K562 (cell line): ENCODE measurements at regions of chr3 and their contacts with region 1.

Region 1: GRCh38 chr3:180594631-180595558 is 7.1 kb upstream of the TTC14 start:
- DNase-seq: peak in 1 of 4 experiments; percentile 32
- ATAC-seq: peak; percentile 54; the same call in 1 of the 3 replicates
- H3K4me3 ChIP-seq: no peak overlapping the region
- H3K27ac ChIP-seq: no peak overlapping the region
- H3K4me1 ChIP-seq: no peaks in the 10 kb centered on the region
- H3K27me3 ChIP-seq: peaks cover 0 to 3% of the 10 kb centered on the region in 2 experiments; a peak in 1 of 5 replicates
- CTCF ChIP-seq: peak in 2 of 3 experiments; percentile 34 to 51; a peak in 2 of 6 replicates
- EP300 ChIP-seq: no peak
- POLR2A ChIP-seq: no peak
- RAD21 ChIP-seq: peak; percentile 53 to 57

Region 2: DNA sequence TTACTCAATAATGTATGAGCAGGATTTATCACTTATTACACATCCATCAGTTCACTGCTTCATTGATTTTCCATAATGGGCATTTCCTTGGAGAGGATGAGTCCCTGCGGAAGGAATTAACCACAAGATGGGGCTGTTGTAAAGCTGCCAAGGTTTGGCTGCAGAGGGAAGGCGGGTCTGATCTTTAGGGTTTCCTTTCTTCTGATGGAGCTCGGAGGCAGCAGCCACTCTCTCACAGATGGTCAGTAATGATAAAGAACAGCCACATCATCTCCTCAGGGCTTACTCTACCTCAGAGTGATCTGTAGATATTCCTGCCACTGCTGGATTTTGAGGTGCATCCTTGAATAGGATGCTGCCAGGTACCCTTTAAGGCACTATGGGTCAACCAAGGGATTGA is 826.8 kb before region 1 on chr3:
- CTCF ChIA-PET with region 1: interaction called, 3 read pairs
- POLR2A ChIA-PET with region 1: no interaction called
- in situ Hi-C with region 1: no loop called
- intact Hi-C with region 1: loop called (anchors 5 kb)
- DNase-seq: peak; percentile 59 to 64 (median 60)
- ATAC-seq: peak; percentile 91
- H3K4me3 ChIP-seq: no peak overlapping the region
- H3K27ac ChIP-seq: no peak overlapping the region
- H3K4me1 ChIP-seq: no peaks in the 10 kb centered on the region
- H3K27me3 ChIP-seq: no peaks in the 10 kb centered on the region
- CTCF ChIP-seq: peak; percentile 60 to 71 (median 70)
- EP300 ChIP-seq: no peak
- POLR2A ChIP-seq: no peak
- RAD21 ChIP-seq: peak; percentile 46 to 71

Region 3: DNA sequence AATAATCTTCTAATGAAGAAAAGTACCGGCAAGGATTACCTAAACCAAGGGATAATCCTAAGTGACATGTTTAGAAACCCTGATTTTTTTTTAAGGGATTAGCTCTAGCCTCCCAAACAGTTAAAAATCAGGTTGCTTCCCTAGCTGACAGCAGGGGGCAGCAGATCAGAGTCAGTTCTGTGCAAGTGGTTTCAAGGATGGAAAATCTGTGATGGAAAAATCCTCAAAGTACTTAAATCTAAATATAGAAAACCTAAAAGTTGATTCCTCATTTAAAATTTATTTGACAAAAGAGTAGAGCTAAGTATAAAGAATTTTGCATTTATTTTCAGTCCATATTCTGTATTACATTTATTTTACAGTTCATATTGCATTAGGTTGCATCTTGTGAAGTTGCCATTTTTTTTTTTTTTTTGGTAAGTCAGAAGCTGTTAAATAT is 665.8 kb before region 1 on chr3:
- CTCF ChIA-PET with region 1: no interaction called
- POLR2A ChIA-PET with region 1: no interaction called
- in situ Hi-C with region 1: loop called (anchors 5 kb)
- intact Hi-C with region 1: loop called (anchors 1 kb)
- DNase-seq: peak; percentile 44 to 55 (median 45)
- ATAC-seq: peak; percentile 81
- H3K4me3 ChIP-seq: no peak overlapping the region
- H3K27ac ChIP-seq: no peak overlapping the region
- H3K4me1 ChIP-seq: no peaks in the 10 kb centered on the region
- H3K27me3 ChIP-seq: no peaks in the 10 kb centered on the region
- CTCF ChIP-seq: peak; percentile 52 to 69 (median 60)
- EP300 ChIP-seq: no peak
- POLR2A ChIP-seq: no peak
- RAD21 ChIP-seq: peak; percentile 28 to 59

Region 4: GRCh38 chr3:180657094-180657493 is 62.2 kb after region 1 on chr3:
- CTCF ChIA-PET with region 1: no interaction called
- POLR2A ChIA-PET with region 1: no interaction called
- in situ Hi-C with region 1: no loop called
- intact Hi-C with region 1: no loop called
- DNase-seq: no peak
- ATAC-seq: no peak
- H3K4me3 ChIP-seq: no peak overlapping the region
- H3K27ac ChIP-seq: no peak overlapping the region
- H3K4me1 ChIP-seq: no peaks in the 10 kb centered on the region
- H3K27me3 ChIP-seq: no peaks in the 10 kb centered on the region
- CTCF ChIP-seq: no peak
- EP300 ChIP-seq: no peak
- POLR2A ChIP-seq: no peak
- RAD21 ChIP-seq: no peak

Region 5: GRCh38 chr3:180828723-180829408 is 234.0 kb after region 1 on chr3:
- CTCF ChIA-PET with region 1: no interaction called
- POLR2A ChIA-PET with region 1: no interaction called
- in situ Hi-C with region 1: no loop called
- intact Hi-C with region 1: no loop called
- DNase-seq: no peak
- ATAC-seq: peak; percentile 67
- H3K4me3 ChIP-seq: no peak overlapping the region
- H3K27ac ChIP-seq: no peak overlapping the region
- H3K4me1 ChIP-seq: peaks cover 0 to 23% of the 10 kb centered on the region in 2 experiments; a peak in 2 of 5 replicates
- H3K27me3 ChIP-seq: peaks cover 19 to 32% of the 10 kb centered on the region in 2 experiments; a peak in 4 of 5 replicates
- CTCF ChIP-seq: no peak
- EP300 ChIP-seq: no peak
- POLR2A ChIP-seq: no peak
- RAD21 ChIP-seq: no peak